ENCODE measurements at regions of chr2 and their contacts with region 1.

Region 1: DNA sequence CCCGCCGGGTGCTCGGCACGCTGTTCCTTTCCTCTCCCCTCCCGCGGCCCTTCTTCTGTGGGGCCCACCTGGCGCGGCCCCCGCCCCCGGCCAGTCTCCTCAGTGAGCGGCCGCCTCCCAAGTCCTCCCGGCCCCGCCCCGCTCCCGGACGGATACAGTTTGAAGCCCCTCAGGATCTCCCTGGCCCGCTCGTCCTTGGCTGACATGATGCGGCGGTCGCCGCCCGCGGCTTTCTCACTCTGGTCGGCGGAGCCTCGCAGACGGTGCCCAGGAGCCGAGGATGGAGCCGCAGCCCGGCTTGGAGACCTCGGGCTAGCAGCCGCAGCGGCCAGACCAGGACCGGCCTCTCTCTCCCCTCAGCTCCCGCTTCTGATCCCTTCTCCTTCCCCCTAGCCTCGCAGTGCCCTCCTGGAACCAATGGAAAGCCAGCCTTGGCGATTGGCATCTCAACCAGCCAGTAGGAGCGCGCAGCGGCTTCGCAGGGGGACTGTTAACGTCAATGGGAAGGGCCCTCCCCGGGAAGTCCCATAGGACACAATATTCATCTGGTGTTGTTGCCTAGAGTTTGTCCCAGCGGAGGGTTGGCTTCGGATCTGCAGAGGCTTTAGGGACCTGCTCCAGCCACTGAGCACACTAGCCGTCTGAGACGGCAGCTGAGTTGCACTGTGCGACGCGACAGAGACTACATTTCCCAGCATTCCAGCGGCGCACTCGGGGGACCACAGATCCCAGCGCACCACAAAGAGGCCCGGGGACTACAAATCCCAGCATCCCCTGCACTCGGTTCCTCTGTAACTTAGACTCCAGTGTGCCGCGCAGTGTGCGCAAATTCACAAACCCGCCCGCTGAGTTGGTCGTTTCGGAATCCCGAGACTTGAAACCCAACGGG is at the start of gene PDE6D:
- DNase-seq: peak; percentile 98
- H3K4me3 Mint-ChIP-seq: peak within 1 kb of the TSS; percentile 92
- H3K27ac Mint-ChIP-seq: peak within 1 kb of the TSS; percentile 96
- H3K4me1 Mint-ChIP-seq: peaks cover 47% of the 10 kb centered on the region
- H3K27me3 Mint-ChIP-seq: no peaks in the 10 kb centered on the region
- total RNA-seq, gene PDE6D: 25.6 to 27.1 TPM

Region 2: DNA sequence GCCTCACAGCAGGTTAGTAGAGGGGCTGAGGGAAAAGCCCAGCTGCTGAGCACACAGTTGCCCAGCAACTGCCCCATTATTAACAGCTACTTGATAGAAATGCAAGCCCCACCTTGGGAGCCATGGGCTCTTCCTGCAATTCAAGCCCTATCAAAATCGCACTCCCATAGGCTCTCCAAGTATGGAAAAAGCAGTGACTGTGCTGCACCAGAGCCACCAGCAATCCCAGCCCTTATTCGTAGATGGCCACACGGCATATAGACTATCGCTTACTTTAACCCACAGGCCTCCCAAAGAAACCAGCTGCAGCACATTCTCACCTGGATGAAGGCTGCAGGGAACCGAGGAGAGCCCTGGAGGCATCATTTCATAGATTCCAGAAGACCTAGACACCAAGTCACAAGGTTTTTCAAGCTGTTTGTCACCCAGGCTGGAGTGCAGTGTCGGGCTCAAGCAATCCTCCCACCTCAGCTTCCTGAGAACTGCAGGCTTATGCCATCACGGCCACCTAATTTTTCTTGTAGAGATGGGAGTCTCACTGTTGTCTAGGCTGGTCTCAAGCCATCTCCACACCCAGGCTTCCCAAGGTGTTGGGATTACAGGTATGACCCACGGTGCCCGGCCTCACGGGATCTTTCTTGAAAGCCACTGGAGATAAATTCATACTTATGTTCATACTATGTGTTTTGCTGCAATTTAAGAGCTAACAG is 328.2 kb before region 1 on chr2:
- CTCF ChIA-PET with region 1: no interaction called
- intact Hi-C with region 1: no loop called
- DNase-seq: no peak
- H3K4me3 Mint-ChIP-seq: no peak overlapping the region
- H3K27ac Mint-ChIP-seq: peak overlapping the region; percentile 25
- H3K4me1 Mint-ChIP-seq: peaks cover 11% of the 10 kb centered on the region
- H3K27me3 Mint-ChIP-seq: no peaks in the 10 kb centered on the region

Region 3: GRCh38 chr2:231514103-231514950 is 266.8 kb before region 1 on chr2:
- CTCF ChIA-PET with region 1: no interaction called
- intact Hi-C with region 1: loop called (anchors 1 kb)
- DNase-seq: peak; percentile 99
- H3K4me3 Mint-ChIP-seq: peak overlapping the region; percentile 95
- H3K27ac Mint-ChIP-seq: peak overlapping the region; percentile 92
- H3K4me1 Mint-ChIP-seq: peaks cover 13% of the 10 kb centered on the region
- H3K27me3 Mint-ChIP-seq: no peaks in the 10 kb centered on the region

Region 4: DNA sequence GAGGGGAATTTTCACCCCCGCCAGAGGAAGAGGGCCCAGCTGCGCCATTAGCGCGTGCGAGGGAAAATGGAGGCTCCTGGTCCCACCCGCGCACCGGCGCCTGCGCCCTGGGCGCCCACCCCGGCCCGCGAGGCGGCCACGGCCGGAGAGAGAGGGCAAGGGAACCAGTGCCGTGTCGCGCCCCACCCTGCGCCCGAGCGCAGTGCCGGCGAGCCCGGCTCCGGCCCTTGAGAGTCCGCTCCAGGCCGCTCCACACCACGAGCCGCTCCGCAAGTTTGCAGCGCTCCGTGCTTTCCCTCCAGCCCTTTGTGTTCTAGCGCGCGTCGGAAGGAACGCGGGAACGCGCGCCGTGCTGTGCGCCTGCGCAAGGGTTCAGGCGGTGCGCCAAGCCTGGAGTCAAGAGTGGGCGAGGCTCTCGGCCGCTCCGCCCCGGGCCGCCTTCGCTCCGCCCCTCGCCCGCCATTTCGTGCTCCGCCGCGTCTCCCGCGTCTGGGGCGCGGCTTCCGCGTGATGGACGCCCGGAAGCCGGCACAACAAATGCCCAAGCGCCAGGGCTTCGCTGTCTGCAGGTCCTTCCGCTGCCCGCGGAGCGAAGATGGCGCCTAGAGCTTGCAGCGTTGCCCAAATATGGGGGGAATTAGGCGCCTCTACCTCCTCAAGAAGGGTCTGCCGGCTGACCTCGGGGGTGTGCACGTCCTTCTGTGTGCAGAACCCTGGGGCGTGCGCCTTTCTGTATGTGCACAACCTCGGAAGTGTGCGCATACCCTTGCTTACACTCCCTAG is 118.9 kb before region 1 on chr2:
- CTCF ChIA-PET with region 1: no interaction called
- intact Hi-C with region 1: loop called (anchors 1 kb)
- DNase-seq: peak; percentile 96
- H3K4me3 Mint-ChIP-seq: peak overlapping the region; percentile 74
- H3K27ac Mint-ChIP-seq: peak overlapping the region; percentile 92
- H3K4me1 Mint-ChIP-seq: peaks cover 17% of the 10 kb centered on the region
- H3K27me3 Mint-ChIP-seq: no peaks in the 10 kb centered on the region

Region 5: GRCh38 chr2:231765496-231765929 is 15.6 kb before region 1 on chr2:
- CTCF ChIA-PET with region 1: interaction called, 3 read pairs
- intact Hi-C with region 1: loop called (anchors 1 kb)
- DNase-seq: no peak
- H3K4me3 Mint-ChIP-seq: no peak overlapping the region
- H3K27ac Mint-ChIP-seq: no peak overlapping the region
- H3K4me1 Mint-ChIP-seq: peaks cover 21% of the 10 kb centered on the region
- H3K27me3 Mint-ChIP-seq: no peaks in the 10 kb centered on the region

Region 6: GRCh38 chr2:231877533-231878456 is 96.6 kb after region 1 on chr2:
- CTCF ChIA-PET with region 1: no interaction called
- intact Hi-C with region 1: no loop called
- DNase-seq: no peak
- H3K4me3 Mint-ChIP-seq: no peak overlapping the region
- H3K27ac Mint-ChIP-seq: no peak overlapping the region
- H3K4me1 Mint-ChIP-seq: no peaks in the 10 kb centered on the region
- H3K27me3 Mint-ChIP-seq: peaks cover 20% of the 10 kb centered on the region

Region 7: DNA sequence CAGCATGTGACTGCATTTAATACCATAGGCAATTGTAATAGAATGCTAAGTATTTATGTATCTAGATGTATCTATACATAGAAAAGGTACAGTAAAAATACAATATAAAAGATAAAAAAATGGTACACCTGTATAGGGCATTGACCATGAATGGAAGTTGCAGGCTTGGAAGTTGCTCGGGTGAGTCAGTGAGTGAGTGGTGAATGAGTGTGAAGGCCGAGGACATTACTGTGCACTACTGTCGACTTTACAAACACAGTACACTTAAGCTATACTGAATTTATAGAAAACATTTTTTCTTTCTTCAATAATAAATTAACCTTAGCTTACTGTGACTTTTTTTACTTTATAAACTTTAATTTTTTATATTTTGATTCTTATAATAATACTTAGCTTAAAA is 189.3 kb after region 1 on chr2:
- CTCF ChIA-PET with region 1: no interaction called
- intact Hi-C with region 1: no loop called
- DNase-seq: no peak
- H3K4me3 Mint-ChIP-seq: no peak overlapping the region
- H3K27ac Mint-ChIP-seq: no peak overlapping the region
- H3K4me1 Mint-ChIP-seq: peaks cover 18% of the 10 kb centered on the region
- H3K27me3 Mint-ChIP-seq: no peaks in the 10 kb centered on the region

Region 8: GRCh38 chr2:232315049-232315922 is 534.1 kb after region 1 on chr2:
- CTCF ChIA-PET with region 1: no interaction called
- intact Hi-C with region 1: loop called (anchors 5 kb)
- DNase-seq: peak; percentile 90
- H3K4me3 Mint-ChIP-seq: peak overlapping the region; percentile 61
- H3K27ac Mint-ChIP-seq: peak overlapping the region; percentile 92
- H3K4me1 Mint-ChIP-seq: peaks cover 70% of the 10 kb centered on the region
- H3K27me3 Mint-ChIP-seq: no peaks in the 10 kb centered on the region

Measured in activated naive CD4-positive, alpha-beta T cell treated with anti-CD3 and anti-CD28 coated beads for 36 hours (primary cell).